ENCODE measurements at regions of chr14 and their contacts with region 1.

Region 1: GRCh38 chr14:54555651-54556050 is 11.3 kb upstream of the SAMD4A start:
- DNase-seq: peak in 1 of 4 experiments; percentile 18
- ATAC-seq: peak; percentile 86
- H3K4me3 ChIP-seq: no peak overlapping the region
- H3K27ac ChIP-seq: no peak overlapping the region
- H3K4me1 ChIP-seq: no peaks in the 10 kb centered on the region; a peak in 1 of 5 replicates
- H3K27me3 ChIP-seq: no peaks in the 10 kb centered on the region
- CTCF ChIP-seq: peak; percentile 24 to 49 (median 29); a peak in 3 of 6 replicates
- EP300 ChIP-seq: no peak
- POLR2A ChIP-seq: no peak
- RAD21 ChIP-seq: peak; percentile 10 to 64; a peak in 2 of 4 replicates

Region 2: DNA sequence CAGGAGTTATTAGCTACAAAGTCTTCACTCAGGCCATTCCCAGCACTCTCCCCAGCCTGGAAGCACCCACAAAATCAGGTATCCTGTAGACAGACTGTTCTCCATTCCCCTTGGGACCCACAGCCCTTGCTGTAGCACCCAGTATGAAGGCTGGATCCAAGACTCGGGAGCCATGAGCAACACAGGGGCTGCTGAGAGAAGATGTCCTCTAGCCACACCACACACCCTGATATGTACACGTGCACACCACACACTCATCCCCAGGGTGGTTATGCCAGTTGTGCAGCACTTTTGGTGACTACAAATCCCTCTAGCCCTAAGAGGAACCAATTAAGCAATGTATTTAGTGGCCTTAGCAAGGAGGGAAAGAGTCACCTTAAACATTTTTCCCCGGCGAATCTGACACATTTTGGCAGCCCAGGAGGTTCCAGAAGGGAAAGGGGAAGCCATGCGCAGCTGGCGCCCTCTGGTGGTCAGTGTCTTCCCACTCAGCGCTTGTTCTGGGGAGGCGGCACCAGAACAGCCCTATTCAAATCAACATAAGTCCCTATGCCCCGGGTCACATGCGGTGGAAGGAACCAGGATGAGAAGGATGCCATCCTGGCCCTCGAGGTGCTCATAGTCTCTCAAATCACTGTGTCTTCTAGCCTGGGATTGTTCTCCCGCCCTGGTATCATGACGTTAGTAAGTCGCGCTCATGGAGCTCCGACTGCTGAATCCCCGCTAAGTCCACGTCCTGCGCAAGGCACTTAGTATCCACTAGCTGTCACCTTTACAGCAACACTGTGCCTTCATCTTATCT is 250.1 kb after region 1 on chr14:
- CTCF ChIA-PET with region 1: no interaction called
- POLR2A ChIA-PET with region 1: no interaction called
- in situ Hi-C with region 1: loop called (anchors 10 kb)
- intact Hi-C with region 1: no loop called
- DNase-seq: peak; percentile 69 to 86 (median 71)
- ATAC-seq: peak; percentile 96
- H3K4me3 ChIP-seq: no peak overlapping the region
- H3K27ac ChIP-seq: no peak overlapping the region
- H3K4me1 ChIP-seq: peaks cover 0 to 3% of the 10 kb centered on the region in 2 experiments; a peak in 3 of 5 replicates
- H3K27me3 ChIP-seq: peaks cover 0 to 8% of the 10 kb centered on the region in 2 experiments; a peak in 2 of 5 replicates
- CTCF ChIP-seq: peak; percentile 83 to 89 (median 85)
- EP300 ChIP-seq: no peak
- POLR2A ChIP-seq: no peak
- RAD21 ChIP-seq: peak; percentile 47 to 86

Measured in K562 (cell line).